Activated B cell treated with CpG ODN at 0.5 μM for 24 hours (primary cell): ENCODE measurements at regions of chr2 and their contacts with region 1.

Region 1: GRCh38 chr2:3179208-3179607 is 198.4 kb downstream of the EIPR1 start:
- DNase-seq: no peak
- ATAC-seq: no peak
- H3K4me3 Mint-ChIP-seq: no peak overlapping the region
- H3K27ac Mint-ChIP-seq: no peak overlapping the region
- H3K4me1 Mint-ChIP-seq: no peaks in the 10 kb centered on the region
- H3K27me3 Mint-ChIP-seq: no peaks in the 10 kb centered on the region
- CTCF ChIP-seq: no peak

Region 2: GRCh38 chr2:2275451-2275850 is 903.8 kb before region 1 on chr2:
- CTCF ChIA-PET with region 1: no interaction called
- POLR2A ChIA-PET with region 1: interaction called, 11 read pairs
- intact Hi-C with region 1: no loop called
- DNase-seq: no peak
- ATAC-seq: no peak
- H3K4me3 Mint-ChIP-seq: no peak overlapping the region
- H3K27ac Mint-ChIP-seq: no peak overlapping the region
- H3K4me1 Mint-ChIP-seq: no peaks in the 10 kb centered on the region
- H3K27me3 Mint-ChIP-seq: no peaks in the 10 kb centered on the region
- CTCF ChIP-seq: no peak